Naive thymus-derived CD4-positive, alpha-beta T cell (primary cell): ENCODE measurements at regions of chr19 and their contacts with region 1.

Region 1: DNA sequence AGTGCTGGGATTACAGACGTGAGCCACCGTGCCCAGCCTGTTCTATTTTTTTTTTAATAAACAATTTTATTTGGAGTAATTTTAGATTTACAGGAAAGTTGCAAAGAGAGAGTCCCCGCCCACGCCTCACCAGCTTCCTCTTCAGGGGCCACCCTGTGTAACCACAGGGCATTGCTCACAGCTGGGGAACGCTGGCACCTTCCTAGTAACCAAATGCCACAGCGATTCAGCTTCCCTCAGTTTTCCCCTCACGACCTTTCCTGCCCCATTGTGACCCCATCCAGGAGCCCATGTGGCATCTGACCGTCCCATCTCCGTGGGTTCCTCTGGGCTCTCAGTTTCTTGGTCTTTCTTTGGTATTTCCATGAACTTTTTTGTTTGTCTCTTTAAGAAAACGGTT is 83.9 kb downstream of the GNG7 start:
- DNase-seq: peak in 8 of 9 donors; percentile 46 to 71 (median 60)
- ATAC-seq: peak; percentile 62
- H3K4me3 ChIP-seq: peak overlapping the region; percentile 34
- H3K4me3 Mint-ChIP-seq: peak overlapping the region; percentile 71 to 89 (median 82)
- H3K27ac ChIP-seq: peak overlapping the region; percentile 71
- H3K27ac Mint-ChIP-seq: peak overlapping the region; percentile 85 to 97 (median 93)
- H3K4me1 ChIP-seq: peaks cover 51 to 61% of the 10 kb centered on the region in 2 donors
- H3K4me1 Mint-ChIP-seq: peaks cover 37 to 71% (median 63%) of the 10 kb centered on the region in 7 donors
- H3K27me3 ChIP-seq: no peaks in the 10 kb centered on the region
- H3K27me3 Mint-ChIP-seq: peaks cover 0 to 3% (median 0%) of the 10 kb centered on the region in 5 donors

Region 2: DNA sequence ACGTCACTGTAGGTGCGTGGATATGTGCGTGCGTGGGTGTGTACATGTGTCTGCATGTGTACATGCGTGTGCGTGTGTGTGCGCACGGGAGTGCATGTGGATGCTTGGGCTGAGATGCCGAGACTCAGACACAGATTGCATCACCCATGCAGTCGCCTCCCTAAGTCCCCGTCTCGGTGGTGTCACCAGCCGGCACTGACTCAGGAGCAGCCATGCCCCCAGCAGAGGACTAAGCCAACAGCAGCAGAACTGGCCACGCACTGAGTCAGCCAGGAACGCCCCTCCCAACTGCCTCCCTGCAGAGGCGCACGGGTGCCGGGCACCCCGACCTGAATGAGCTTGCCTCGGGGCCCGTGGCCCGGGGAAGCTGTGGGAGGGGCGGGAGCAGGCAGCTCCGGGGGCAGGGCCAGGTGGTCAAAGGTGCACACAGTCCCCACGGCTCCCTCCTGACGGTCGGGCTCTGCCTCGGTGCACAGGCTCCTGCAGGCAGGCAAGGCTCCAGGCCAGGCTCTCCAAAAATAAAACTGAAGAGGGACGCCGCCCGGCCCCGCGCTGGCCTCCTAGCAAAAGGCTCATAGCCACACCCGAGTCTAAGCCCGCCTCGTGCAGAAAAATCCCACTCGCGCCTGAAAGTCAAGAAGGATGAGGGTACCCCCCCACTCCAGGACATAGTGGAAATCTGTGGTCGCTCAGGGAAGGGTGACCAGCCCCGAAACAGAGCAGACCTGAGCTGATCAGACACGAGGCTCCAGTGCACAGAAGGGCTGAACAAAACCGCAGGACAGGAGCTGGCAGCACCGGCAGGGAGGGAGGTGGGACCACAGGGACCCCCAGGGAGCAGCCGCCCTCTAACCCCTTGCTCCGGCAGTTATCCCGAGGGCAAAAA is 93.5 kb before region 1 on chr19:
- CTCF ChIA-PET with region 1: no interaction called
- POLR2A ChIA-PET with region 1: no interaction called
- intact Hi-C with region 1: no loop called
- DNase-seq: no peak
- ATAC-seq: no peak
- H3K4me3 ChIP-seq: no peak overlapping the region
- H3K4me3 Mint-ChIP-seq: no peak overlapping the region
- H3K27ac ChIP-seq: no peak overlapping the region
- H3K27ac Mint-ChIP-seq: no peak overlapping the region
- H3K4me1 ChIP-seq: no peaks in the 10 kb centered on the region
- H3K4me1 Mint-ChIP-seq: no peaks in the 10 kb centered on the region
- H3K27me3 ChIP-seq: no peaks in the 10 kb centered on the region
- H3K27me3 Mint-ChIP-seq: no peaks in the 10 kb centered on the region

Region 3: GRCh38 chr19:2602391-2603181 is 16.0 kb before region 1 on chr19:
- CTCF ChIA-PET with region 1: interaction called, 10 read pairs
- POLR2A ChIA-PET with region 1: interaction called, 13 read pairs
- intact Hi-C with region 1: no loop called
- DNase-seq: peak in 1 of 9 donors; percentile 19
- ATAC-seq: no peak
- H3K4me3 ChIP-seq: no peak overlapping the region
- H3K4me3 Mint-ChIP-seq: no peak overlapping the region
- H3K27ac ChIP-seq: no peak overlapping the region
- H3K27ac Mint-ChIP-seq: peak overlapping the region in 2 of 9 donors; percentile 33 to 74
- H3K4me1 ChIP-seq: peaks cover under 1 to 2% of the 10 kb centered on the region in 2 donors
- H3K4me1 Mint-ChIP-seq: peaks cover 7 to 17% (median 12%) of the 10 kb centered on the region in 7 donors
- H3K27me3 ChIP-seq: no peaks in the 10 kb centered on the region
- H3K27me3 Mint-ChIP-seq: peaks cover 0 to 8% (median 0%) of the 10 kb centered on the region in 5 donors

Region 4: DNA sequence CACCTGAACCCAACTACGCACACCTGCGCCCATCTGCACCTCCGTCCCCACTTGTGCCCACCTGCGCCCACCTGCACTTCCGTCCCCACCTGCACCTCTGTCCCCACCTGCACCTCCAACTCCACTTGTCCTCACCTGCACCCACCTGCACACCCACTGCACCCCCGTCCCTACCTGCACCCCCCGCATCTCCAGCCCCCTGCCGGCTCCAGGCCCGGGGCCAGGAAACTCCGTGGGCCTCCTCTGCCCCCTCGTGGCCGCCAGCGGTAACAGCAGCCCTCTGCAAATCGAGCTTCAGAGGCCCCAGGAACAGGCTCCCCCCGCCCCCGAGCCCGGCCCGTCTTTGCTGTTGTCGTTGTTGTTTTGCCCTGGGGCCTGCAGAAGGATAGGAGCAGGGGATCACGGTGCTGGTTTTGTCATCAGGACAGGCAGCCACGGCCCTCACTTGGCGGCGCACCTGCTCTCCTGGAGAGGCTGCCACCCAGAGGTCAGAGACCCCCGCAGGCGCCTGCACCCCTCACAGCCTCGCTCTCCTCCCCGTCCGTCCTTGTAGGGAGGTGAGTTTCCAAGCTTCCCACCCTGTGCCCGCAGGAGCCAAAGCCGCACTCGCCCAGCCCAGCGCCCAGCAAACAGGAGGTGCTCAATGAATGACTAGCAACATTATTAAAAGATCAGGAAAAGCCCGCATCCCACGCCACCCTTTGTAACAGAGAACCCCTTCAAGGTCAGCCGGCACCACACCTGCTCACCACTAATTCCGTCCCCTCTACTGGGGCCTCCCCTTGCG is 18.5 kb after region 1 on chr19:
- CTCF ChIA-PET with region 1: interaction called, 32 read pairs
- POLR2A ChIA-PET with region 1: interaction called, 14 read pairs
- intact Hi-C with region 1: loop called (anchors 1 to 2 kb)
- DNase-seq: peak; percentile 64 to 84 (median 74)
- ATAC-seq: peak; percentile 97
- H3K4me3 ChIP-seq: no peak overlapping the region
- H3K4me3 Mint-ChIP-seq: peak overlapping the region in 5 of 10 donors; percentile 23 to 37 (median 23)
- H3K27ac ChIP-seq: no peak overlapping the region
- H3K27ac Mint-ChIP-seq: peak overlapping the region in 1 of 9 donors; percentile 70
- H3K4me1 ChIP-seq: peaks cover 0 to 10% of the 10 kb centered on the region in 2 donors
- H3K4me1 Mint-ChIP-seq: peaks cover 5 to 18% (median 13%) of the 10 kb centered on the region in 7 donors
- H3K27me3 ChIP-seq: no peaks in the 10 kb centered on the region
- H3K27me3 Mint-ChIP-seq: peaks cover 0 to 11% (median 0%) of the 10 kb centered on the region in 5 donors

Region 5: GRCh38 chr19:2668175-2668763 is 49.7 kb after region 1 on chr19:
- CTCF ChIA-PET with region 1: no interaction called
- POLR2A ChIA-PET with region 1: no interaction called
- intact Hi-C with region 1: no loop called
- DNase-seq: no peak
- ATAC-seq: no peak
- H3K4me3 ChIP-seq: no peak overlapping the region
- H3K4me3 Mint-ChIP-seq: no peak overlapping the region
- H3K27ac ChIP-seq: no peak overlapping the region
- H3K27ac Mint-ChIP-seq: peak overlapping the region in 1 of 9 donors; percentile 4
- H3K4me1 ChIP-seq: no peaks in the 10 kb centered on the region
- H3K4me1 Mint-ChIP-seq: no peaks in the 10 kb centered on the region
- H3K27me3 ChIP-seq: no peaks in the 10 kb centered on the region
- H3K27me3 Mint-ChIP-seq: no peaks in the 10 kb centered on the region